Mucosa of descending colon (tissue), 3 donors: ENCODE measurements at regions of chr13 and their contacts with region 1.

Region 1: DNA sequence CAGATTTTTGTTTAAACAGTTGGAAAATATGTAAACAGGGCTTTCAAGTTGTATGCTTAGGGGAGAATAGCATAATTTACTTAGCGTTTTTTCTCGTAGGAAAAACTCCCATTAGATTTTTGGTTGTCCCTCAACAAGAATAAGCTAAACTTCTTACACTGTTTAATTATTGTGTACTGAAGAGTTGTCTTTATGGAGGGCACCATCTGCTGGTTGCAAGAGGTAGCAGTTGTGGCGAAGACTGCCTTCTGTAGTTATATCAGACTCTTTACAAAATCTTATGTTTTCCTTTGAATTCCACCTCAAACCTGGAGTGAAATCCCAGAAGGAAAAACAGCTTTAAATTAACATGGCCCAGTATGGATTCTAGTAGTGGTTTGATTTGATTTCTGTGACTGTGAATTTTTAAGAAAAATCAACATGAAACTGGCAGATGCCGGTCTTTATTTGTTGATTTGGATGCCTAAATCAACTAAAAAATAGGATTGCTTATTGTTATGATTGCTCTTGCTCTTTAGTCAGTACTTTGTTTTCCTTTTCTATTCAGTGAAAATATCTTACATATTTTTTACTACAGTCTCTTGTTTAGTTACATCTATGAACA is 53.4 kb downstream of the PDS5B start:
- DNase-seq: peak in 2 of 3 donors; percentile 39 to 81
- ATAC-seq: peak; percentile 85
- H3K4me3 ChIP-seq: no peak overlapping the region
- H3K4me1 ChIP-seq: peaks cover 8% of the 10 kb centered on the region
- CTCF ChIP-seq: peak; percentile 64

Region 2: GRCh38 chr13:32297206-32297605 is 342.4 kb before region 1 on chr13:
- intact Hi-C with region 1: no loop called
- DNase-seq: no peak
- ATAC-seq: no peak
- H3K4me3 ChIP-seq: no peak overlapping the region
- H3K4me1 ChIP-seq: no peaks in the 10 kb centered on the region
- CTCF ChIP-seq: no peak

Region 3: DNA sequence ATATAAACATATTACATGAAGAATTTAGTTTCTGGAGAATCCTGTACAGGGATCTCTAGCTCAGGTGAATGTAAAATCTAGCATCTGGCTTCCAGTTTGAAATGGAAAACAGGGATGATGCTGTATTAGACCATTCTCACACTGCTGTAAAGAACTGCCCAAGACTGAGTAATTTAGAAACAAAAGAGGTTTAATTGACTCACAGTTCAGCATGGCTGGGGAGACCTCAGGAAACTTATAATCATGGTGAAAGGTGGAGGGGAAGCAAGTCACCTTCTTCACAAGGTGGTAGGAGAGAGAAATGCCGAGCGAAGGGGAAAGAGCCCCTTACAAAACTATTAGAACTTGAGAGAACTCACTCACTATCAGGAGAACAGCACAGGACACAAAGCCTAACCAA is 84.0 kb before region 1 on chr13:
- intact Hi-C with region 1: no loop called
- DNase-seq: no peak
- ATAC-seq: no peak
- H3K4me3 ChIP-seq: no peak overlapping the region
- H3K4me1 ChIP-seq: no peaks in the 10 kb centered on the region
- CTCF ChIP-seq: no peak

Region 4: GRCh38 chr13:32586080-32586900 is 53.3 kb before region 1 on chr13 and contains the start of gene PDS5B:
- intact Hi-C with region 1: loop called (anchors 2 to 5 kb)
- DNase-seq: peak; percentile 96 to 97 (median 96)
- ATAC-seq: peak; percentile 99
- H3K4me3 ChIP-seq: peak within 1 kb of the TSS; percentile 74
- H3K4me1 ChIP-seq: peaks cover 9% of the 10 kb centered on the region
- CTCF ChIP-seq: peak; percentile 95
- total RNA-seq, gene PDS5B: 25.2 to 66.7 (median 27.5) TPM